Activated CD4-positive, alpha-beta T cell treated with anti-CD3 and anti-CD28 coated beads for 36 hours (primary cell): ENCODE measurements at regions of chr2 and their contacts with region 1.

Region 1: GRCh38 chr2:61694312-61695274 is 156.4 kb upstream of the XPO1 start:
- DNase-seq: peak; percentile 93
- ATAC-seq: peak; percentile 98
- H3K4me3 Mint-ChIP-seq: peak overlapping the region; percentile 80
- H3K27ac Mint-ChIP-seq: peak overlapping the region; percentile 86
- H3K4me1 Mint-ChIP-seq: peaks cover 14% of the 10 kb centered on the region
- H3K27me3 Mint-ChIP-seq: no peaks in the 10 kb centered on the region

Region 2: DNA sequence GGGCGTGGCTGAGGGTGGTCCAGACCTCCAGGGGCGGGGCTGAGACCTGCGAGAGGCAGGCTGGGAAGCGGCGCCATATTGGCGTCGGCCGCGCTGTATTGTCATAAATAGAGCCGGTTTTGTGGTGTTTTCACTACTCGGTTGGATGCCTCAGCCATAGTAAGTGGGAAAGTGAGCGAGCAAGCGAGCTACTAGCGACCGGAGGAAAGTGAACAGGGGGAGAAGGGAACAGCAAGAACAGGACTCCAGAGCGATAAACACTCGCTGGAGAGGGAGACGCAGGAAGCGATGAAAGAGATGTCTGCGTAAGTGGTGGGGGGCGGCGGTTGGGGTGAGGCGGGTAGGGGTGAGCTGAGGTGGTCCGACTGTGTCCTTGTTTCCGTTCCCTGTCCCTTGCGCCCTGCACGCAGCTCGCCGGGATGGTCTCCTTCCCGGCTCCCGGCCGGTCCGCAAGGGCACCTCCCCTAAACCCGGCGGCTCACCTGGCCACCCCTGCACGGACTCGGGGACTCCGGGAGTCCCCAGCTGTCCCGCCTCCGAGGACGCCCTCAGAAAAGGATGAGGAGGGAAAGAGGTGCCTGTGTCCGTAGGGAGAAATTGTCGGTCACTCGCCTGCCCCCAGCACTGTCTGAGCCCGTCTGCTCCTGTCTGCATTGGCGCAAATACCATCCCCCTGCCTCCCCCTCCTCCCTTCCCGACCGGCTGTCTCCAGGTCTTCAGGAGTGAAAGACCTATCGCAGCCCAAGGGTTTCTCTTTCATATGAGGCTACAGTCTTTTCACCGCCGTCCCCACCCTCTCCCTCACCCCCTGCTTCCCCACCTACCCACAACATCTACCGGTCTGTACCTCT is 938.2 kb before region 1 on chr2 and contains the start of gene PAPOLG:
- CTCF ChIA-PET with region 1: no interaction called
- POLR2A ChIA-PET with region 1: no interaction called
- intact Hi-C with region 1: loop called in 1 of 2 experiments (anchors 2 kb)
- DNase-seq: peak; percentile 99
- ATAC-seq: peak; percentile 98
- H3K4me3 Mint-ChIP-seq: peak within 1 kb of the TSS; percentile 99
- H3K27ac Mint-ChIP-seq: peak within 1 kb of the TSS; percentile 100
- H3K4me1 Mint-ChIP-seq: peaks cover 34% of the 10 kb centered on the region
- H3K27me3 Mint-ChIP-seq: no peaks in the 10 kb centered on the region
- total RNA-seq, gene PAPOLG: 13.8 to 14.2 TPM

Region 3: DNA sequence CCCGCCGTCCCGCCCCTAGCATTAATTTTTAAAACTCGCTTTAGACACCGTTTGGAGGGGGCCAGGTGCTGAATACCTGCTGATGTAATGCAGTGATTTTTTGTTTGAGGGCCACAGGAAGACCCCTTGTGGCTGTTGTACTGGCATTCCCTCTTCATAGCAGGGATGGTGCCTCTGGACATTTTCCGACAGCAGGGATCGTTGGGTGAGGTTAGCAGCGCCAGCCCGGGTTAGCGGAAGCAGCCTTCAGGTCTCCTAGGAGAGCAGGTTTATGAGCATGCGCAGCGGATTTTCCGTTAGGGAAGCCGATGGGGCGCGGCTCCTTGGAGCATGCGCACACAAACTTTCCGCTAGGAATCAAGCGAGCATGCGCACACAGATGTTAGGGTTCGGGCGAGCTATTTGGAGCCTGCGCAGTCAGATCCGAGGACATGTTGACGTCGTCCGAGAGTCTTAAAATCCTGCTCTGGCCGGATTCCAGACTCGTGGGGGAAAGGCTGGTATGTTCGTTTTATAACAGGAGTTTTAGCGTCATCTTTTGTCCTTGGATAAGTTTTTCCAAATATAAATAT is 549.8 kb before region 1 on chr2:
- CTCF ChIA-PET with region 1: no interaction called
- POLR2A ChIA-PET with region 1: no interaction called
- intact Hi-C with region 1: loop called in 1 of 2 experiments (anchors 1 kb)
- DNase-seq: peak; percentile 96
- ATAC-seq: peak; percentile 99
- H3K4me3 Mint-ChIP-seq: peak overlapping the region; percentile 98
- H3K27ac Mint-ChIP-seq: peak overlapping the region; percentile 96
- H3K4me1 Mint-ChIP-seq: peaks cover 4% of the 10 kb centered on the region
- H3K27me3 Mint-ChIP-seq: no peaks in the 10 kb centered on the region

Region 4: GRCh38 chr2:61478086-61478485 is 216.5 kb before region 1 on chr2:
- CTCF ChIA-PET with region 1: no interaction called
- POLR2A ChIA-PET with region 1: no interaction called
- intact Hi-C with region 1: no loop called
- DNase-seq: no peak
- ATAC-seq: no peak
- H3K4me3 Mint-ChIP-seq: no peak overlapping the region
- H3K27ac Mint-ChIP-seq: no peak overlapping the region
- H3K4me1 Mint-ChIP-seq: no peaks in the 10 kb centered on the region
- H3K27me3 Mint-ChIP-seq: no peaks in the 10 kb centered on the region

Region 5: GRCh38 chr2:61585383-61585782 is 109.2 kb before region 1 on chr2:
- CTCF ChIA-PET with region 1: no interaction called
- POLR2A ChIA-PET with region 1: no interaction called
- intact Hi-C with region 1: no loop called
- DNase-seq: no peak
- ATAC-seq: no peak
- H3K4me3 Mint-ChIP-seq: no peak overlapping the region
- H3K27ac Mint-ChIP-seq: no peak overlapping the region
- H3K4me1 Mint-ChIP-seq: peaks cover 4% of the 10 kb centered on the region
- H3K27me3 Mint-ChIP-seq: no peaks in the 10 kb centered on the region

Region 6: DNA sequence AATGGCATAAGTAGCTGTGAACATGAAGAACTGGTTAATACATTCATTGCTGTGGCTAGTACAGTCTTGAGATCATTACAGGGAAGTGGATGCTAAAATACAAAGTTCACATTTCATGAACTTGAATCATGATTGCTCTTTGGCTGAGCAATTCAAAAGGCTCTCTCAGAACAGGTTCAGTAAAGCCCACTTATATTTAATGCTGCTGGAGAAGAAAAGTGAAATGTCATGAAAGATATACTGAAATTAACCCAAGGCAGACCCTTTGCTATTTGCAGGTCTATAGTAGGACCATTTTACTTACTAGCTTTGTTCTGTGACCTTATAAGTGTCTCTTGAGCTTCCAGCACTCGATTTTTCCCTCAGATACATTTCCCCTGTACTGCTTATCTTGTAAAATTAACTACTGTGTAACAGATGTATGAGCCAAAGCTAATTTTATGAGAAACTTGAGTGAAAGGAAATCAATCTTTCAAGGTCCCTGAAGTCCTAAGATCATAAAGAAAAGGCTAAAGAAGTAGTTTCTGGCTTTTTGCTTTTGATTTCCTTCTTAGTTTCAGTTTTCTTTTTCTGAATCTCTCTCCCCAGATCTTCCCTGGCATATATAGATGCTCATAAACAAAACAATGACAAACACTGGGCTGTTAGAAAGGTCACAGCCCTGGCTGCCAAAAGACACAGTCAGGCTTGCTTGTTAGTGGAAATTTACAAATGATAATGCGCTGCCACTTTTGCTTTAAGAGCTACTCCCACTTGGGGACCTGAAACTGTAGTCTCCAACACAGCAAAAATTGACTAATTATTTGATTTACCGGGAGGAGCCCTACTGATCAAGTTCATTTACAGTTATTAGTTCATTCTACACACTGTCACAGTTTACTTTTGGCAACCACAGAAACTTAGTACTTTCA is 23.7 kb before region 1 on chr2:
- CTCF ChIA-PET with region 1: no interaction called
- POLR2A ChIA-PET with region 1: no interaction called
- intact Hi-C with region 1: loop called in 1 of 2 experiments (anchors 1 kb)
- DNase-seq: peak; percentile 52
- ATAC-seq: peak; percentile 96
- H3K4me3 Mint-ChIP-seq: peak overlapping the region; percentile 32
- H3K27ac Mint-ChIP-seq: peak overlapping the region; percentile 76
- H3K4me1 Mint-ChIP-seq: peaks cover 20% of the 10 kb centered on the region
- H3K27me3 Mint-ChIP-seq: no peaks in the 10 kb centered on the region

Region 7: DNA sequence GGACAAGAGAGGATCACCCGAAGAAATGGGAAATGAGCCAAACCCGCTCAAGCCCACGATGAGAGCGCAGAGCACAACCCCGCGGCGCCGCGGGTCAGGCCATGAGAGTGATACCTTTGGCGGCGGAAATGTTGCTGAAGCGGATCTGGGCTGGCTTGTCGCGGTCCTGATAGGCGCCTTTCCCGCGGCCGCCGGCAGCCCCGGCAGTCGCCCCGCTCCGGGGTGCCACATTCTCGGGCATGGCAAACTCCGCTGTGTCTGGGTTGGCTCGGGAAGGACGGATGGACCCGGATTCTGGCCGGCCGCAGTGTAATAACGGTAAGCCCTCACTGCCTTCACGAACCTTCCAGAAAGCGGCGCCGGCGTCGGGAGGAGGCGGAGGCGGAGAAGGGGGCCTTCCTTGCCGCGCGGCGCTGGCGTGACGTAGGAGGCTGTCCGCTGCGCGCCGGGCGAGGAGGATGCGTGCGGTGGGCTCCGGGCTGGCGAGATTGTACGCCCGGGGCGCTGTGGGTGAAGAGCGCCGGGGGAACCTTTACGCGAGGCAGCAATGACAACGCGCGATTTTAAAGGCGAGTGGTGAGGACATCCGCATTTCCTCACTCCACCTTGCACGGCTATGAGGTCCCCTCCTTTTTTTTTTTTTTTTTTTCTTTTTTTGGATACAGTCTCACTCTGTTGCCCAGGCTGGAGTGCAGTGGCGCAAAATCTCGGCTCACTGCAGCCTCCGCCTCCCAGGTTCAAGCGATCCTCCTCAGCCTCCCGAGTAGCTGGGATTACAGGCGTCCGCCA is 193.9 kb after region 1 on chr2 and contains the start of gene CCT4:
- CTCF ChIA-PET with region 1: no interaction called
- POLR2A ChIA-PET with region 1: no interaction called
- intact Hi-C with region 1: loop called in 1 of 2 experiments (anchors 1 kb)
- DNase-seq: peak; percentile 93
- ATAC-seq: peak; percentile 79
- H3K4me3 Mint-ChIP-seq: peak within 1 kb of the TSS; percentile 99
- H3K27ac Mint-ChIP-seq: peak within 1 kb of the TSS; percentile 99
- H3K4me1 Mint-ChIP-seq: peaks cover 31% of the 10 kb centered on the region
- H3K27me3 Mint-ChIP-seq: no peaks in the 10 kb centered on the region
- total RNA-seq, gene CCT4: 255 to 373 TPM

Region 8: DNA sequence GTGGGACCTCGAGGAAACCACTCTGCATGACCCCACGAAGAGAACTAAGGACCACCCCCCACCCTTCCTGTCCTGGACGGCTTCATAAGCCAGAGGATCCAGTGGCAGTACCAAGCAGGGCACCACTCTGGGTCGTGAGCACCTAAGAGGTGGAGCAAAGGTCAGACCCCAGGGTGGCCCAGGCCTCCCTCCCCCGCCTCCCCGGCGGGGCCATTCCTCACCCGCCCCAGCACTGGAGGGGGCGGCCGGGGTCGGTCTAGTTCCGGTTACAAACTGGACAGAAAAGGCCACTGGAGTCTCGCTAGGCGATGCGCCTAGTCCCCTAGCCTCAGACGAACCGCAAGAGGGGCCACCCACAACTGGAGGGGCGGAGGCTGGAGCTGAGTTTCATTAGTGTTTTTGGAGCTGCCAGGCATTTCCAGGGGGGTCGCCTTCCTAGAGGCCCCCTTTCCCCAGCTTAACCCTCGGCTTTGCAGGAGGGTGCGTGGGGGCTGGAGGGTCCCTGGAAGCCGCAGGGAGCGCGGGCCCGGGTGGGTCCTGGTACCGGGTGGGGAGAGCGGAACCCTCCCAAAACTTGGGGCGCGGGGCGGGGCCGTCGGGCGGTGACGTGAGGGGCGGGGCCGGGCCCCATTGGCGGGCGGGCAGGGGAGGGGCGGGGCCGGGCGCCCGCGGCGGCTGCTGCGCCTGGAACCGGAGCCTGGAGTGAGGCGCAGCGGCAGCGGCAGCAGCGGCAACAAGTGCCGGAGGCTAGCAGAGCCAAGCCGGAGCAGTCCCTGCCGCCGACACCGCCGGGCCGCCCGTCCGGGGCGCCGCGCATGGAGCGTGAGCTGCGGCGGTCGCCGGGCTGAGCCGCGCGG is 501.1 kb after region 1 on chr2 and contains the start of gene B3GNT2:
- CTCF ChIA-PET with region 1: no interaction called
- POLR2A ChIA-PET with region 1: no interaction called
- intact Hi-C with region 1: loop called in 1 of 2 experiments (anchors 2 kb)
- DNase-seq: peak; percentile 92
- ATAC-seq: peak; percentile 62
- H3K4me3 Mint-ChIP-seq: peak within 1 kb of the TSS; percentile 92
- H3K27ac Mint-ChIP-seq: peak within 1 kb of the TSS; percentile 92
- H3K4me1 Mint-ChIP-seq: peaks cover 28% of the 10 kb centered on the region
- H3K27me3 Mint-ChIP-seq: no peaks in the 10 kb centered on the region
- total RNA-seq, gene B3GNT2: 28.6 to 31.7 TPM